ENCODE measurements at regions of chr14 and their contacts with region 1.

Region 1: GRCh38 chr14:61837336-61838229 is 75.4 kb downstream of the SNAPC1 start:
- DNase-seq: peak; percentile 46
- ATAC-seq: peak; percentile 99
- H3K4me3 ChIP-seq: no peak overlapping the region
- H3K27ac ChIP-seq: no peak overlapping the region
- H3K4me1 ChIP-seq: no peaks in the 10 kb centered on the region; the same call in 1 of the 2 replicates
- H3K27me3 ChIP-seq: no peaks in the 10 kb centered on the region
- CTCF ChIP-seq: peak; percentile 93 to 96 (median 96)
- EP300 ChIP-seq: no peak
- POLR2A ChIP-seq: no peak
- RAD21 ChIP-seq: peak; percentile 100

Region 2: DNA sequence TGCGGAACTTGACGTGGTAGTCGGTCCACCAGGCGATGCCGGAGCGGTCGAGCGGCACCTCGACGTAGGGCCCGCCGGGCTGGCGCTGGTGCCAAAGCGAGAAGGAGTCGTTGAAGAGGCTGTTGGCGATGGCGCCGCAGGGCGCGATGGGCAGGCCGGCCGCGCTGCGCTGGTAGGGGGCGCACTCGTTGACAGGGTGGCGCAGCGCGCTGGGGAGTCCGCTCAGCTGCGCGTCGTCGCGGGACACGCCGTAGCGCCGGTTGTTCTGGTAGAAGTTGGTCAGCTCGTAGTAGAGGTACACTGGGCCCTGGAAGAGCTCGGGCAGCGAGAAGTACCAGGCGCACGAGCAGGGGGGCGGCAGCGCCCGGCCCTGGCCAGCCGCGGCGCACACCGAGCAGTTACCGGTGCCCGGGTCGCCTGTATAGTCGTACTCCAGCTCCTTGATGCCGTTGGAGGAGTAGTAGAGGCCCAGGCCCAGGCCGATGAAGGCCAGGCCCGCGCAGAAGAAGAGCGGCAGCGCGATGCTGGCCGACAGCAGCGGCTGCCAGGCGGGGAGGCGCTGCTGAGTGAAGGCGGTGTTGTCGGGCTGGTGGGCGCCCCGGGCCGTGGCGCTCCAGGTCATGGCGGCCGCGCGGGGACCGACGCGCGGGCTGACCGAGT is 556.9 kb before region 1 on chr14:
- CTCF ChIA-PET with region 1: interaction called, 10 read pairs
- POLR2A ChIA-PET with region 1: interaction called, 5 read pairs
- RAD21 ChIA-PET with region 1: interaction called, 3 read pairs
- SMC1A ChIA-PET with region 1: interaction called, 9 read pairs
- in situ Hi-C with region 1: no loop called
- intact Hi-C with region 1: no loop called
- DNase-seq: no peak
- ATAC-seq: peak; percentile 43
- H3K4me3 ChIP-seq: peak overlapping the region; percentile 50; the same call in 1 of the 2 replicates
- H3K27ac ChIP-seq: no peak overlapping the region
- H3K4me1 ChIP-seq: no peaks in the 10 kb centered on the region
- H3K27me3 ChIP-seq: peaks cover 2 to 20% of the 10 kb centered on the region in 2 experiments
- CTCF ChIP-seq: no peak
- EP300 ChIP-seq: no peak
- POLR2A ChIP-seq: no peak
- RAD21 ChIP-seq: no peak

Region 3: GRCh38 chr14:61461808-61462275 is 375.7 kb before region 1 on chr14:
- CTCF ChIA-PET with region 1: interaction called, 39 read pairs
- POLR2A ChIA-PET with region 1: no interaction called
- RAD21 ChIA-PET with region 1: interaction called, 22 read pairs
- SMC1A ChIA-PET with region 1: interaction called, 22 read pairs
- in situ Hi-C with region 1: loop called (anchors 5 kb)
- intact Hi-C with region 1: loop called (anchors 1 kb)
- DNase-seq: no peak
- ATAC-seq: peak; percentile 70
- H3K4me3 ChIP-seq: no peak overlapping the region
- H3K27ac ChIP-seq: no peak overlapping the region
- H3K4me1 ChIP-seq: no peaks in the 10 kb centered on the region
- H3K27me3 ChIP-seq: no peaks in the 10 kb centered on the region
- CTCF ChIP-seq: peak; percentile 42 to 67 (median 57); a peak in 5 of 6 replicates
- EP300 ChIP-seq: no peak
- POLR2A ChIP-seq: no peak
- RAD21 ChIP-seq: peak; percentile 76

Region 4: DNA sequence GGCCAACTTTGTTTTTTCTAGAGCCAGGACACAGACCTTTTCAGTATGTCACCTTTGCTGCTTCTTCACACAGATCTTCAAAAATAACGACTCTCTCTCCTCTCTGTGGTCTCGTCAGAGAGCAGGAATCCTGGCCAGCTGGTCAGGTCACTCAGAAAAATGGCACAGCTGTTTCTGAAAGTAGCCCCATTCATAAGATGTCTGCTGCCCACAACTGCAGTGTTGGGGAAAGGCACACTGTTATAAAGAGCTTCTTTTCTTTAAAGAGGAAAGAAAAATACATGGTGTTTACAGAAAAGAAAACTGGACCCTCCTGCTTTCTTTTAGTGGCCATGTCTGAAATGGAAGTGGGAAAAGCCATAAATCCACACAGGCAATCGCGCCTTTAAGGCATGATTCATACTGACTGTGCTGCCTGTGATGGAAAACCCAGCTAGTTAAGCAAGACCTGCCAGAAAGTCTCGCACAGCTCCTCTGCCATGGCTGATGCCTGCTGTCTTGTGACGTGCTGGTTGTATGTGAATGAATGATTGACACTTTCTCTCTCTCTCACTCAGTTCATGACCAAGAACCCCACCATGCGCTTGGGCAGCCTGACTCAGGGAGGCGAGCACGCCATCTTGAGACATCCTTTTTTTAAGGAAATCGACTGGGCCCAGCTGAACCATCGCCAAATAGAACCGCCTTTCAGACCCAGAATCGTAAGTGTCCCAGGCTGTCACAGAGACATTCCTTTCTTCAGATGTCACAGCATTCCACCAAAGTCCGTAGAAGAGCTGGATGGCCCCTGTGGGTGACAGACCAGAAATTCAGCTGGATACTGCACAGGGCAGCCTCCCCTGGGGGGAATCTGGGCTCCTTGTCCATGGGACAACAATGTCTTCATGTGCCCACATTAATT is 290.1 kb before region 1 on chr14:
- CTCF ChIA-PET with region 1: interaction called, 10 read pairs
- POLR2A ChIA-PET with region 1: no interaction called
- RAD21 ChIA-PET with region 1: interaction called, 3 read pairs
- SMC1A ChIA-PET with region 1: interaction called, 16 read pairs
- in situ Hi-C with region 1: no loop called
- intact Hi-C with region 1: no loop called
- DNase-seq: no peak
- ATAC-seq: no peak
- H3K4me3 ChIP-seq: no peak overlapping the region
- H3K27ac ChIP-seq: no peak overlapping the region
- H3K4me1 ChIP-seq: peaks cover 3% of the 10 kb centered on the region
- H3K27me3 ChIP-seq: no peaks in the 10 kb centered on the region
- CTCF ChIP-seq: no peak
- EP300 ChIP-seq: no peak
- POLR2A ChIP-seq: no peak
- RAD21 ChIP-seq: no peak

Region 5: GRCh38 chr14:61737915-61738314 is 99.7 kb before region 1 on chr14:
- CTCF ChIA-PET with region 1: interaction called, 15 read pairs
- POLR2A ChIA-PET with region 1: no interaction called
- RAD21 ChIA-PET with region 1: interaction called, 14 read pairs
- SMC1A ChIA-PET with region 1: interaction called, 15 read pairs
- in situ Hi-C with region 1: no loop called
- intact Hi-C with region 1: no loop called
- DNase-seq: no peak
- ATAC-seq: no peak
- H3K4me3 ChIP-seq: no peak overlapping the region
- H3K27ac ChIP-seq: no peak overlapping the region
- H3K4me1 ChIP-seq: no peaks in the 10 kb centered on the region
- H3K27me3 ChIP-seq: no peaks in the 10 kb centered on the region
- CTCF ChIP-seq: no peak
- EP300 ChIP-seq: no peak
- POLR2A ChIP-seq: no peak
- RAD21 ChIP-seq: no peak

Region 6: DNA sequence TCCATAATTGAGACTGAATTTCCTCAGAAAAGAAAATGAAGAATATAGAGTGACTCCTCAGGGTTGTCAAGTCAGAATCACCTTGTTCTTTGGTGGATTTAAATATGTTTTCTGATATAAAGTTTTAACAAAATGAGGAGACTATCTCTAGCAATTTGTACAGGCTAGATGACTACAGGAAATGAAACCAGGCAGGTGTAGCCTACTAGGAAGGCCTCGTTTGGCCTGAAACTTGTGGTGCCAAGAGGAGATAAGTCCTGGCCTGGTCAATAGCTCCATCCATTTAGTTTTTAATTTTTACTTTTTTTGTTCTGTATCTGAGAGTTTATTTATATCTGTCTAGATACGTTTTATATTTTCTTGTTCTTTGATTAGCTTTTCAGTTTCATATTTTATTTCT is 33.8 kb before region 1 on chr14:
- CTCF ChIA-PET with region 1: interaction called, 19 read pairs
- POLR2A ChIA-PET with region 1: no interaction called
- RAD21 ChIA-PET with region 1: interaction called, 4 read pairs
- SMC1A ChIA-PET with region 1: interaction called, 13 read pairs
- in situ Hi-C with region 1: no loop called
- intact Hi-C with region 1: no loop called
- DNase-seq: no peak
- ATAC-seq: peak; percentile 78
- H3K4me3 ChIP-seq: no peak overlapping the region
- H3K27ac ChIP-seq: no peak overlapping the region
- H3K4me1 ChIP-seq: no peaks in the 10 kb centered on the region
- H3K27me3 ChIP-seq: no peaks in the 10 kb centered on the region
- CTCF ChIP-seq: no peak
- EP300 ChIP-seq: no peak
- POLR2A ChIP-seq: no peak
- RAD21 ChIP-seq: no peak

Region 7: GRCh38 chr14:61973868-61974321 is 136.3 kb after region 1 on chr14:
- CTCF ChIA-PET with region 1: no interaction called
- POLR2A ChIA-PET with region 1: no interaction called
- RAD21 ChIA-PET with region 1: no interaction called
- SMC1A ChIA-PET with region 1: no interaction called
- in situ Hi-C with region 1: no loop called
- intact Hi-C with region 1: no loop called
- DNase-seq: no peak
- ATAC-seq: no peak
- H3K4me3 ChIP-seq: no peak overlapping the region
- H3K27ac ChIP-seq: no peak overlapping the region
- H3K4me1 ChIP-seq: no peaks in the 10 kb centered on the region
- H3K27me3 ChIP-seq: no peaks in the 10 kb centered on the region
- CTCF ChIP-seq: no peak
- EP300 ChIP-seq: no peak
- POLR2A ChIP-seq: no peak
- RAD21 ChIP-seq: no peak